HCT116 (cell line): ENCODE measurements at regions of chr12 and their contacts with region 1.

Region 1: GRCh38 chr12:46357438-46358324 is 14.9 kb downstream of the SLC38A2 start:
- DNase-seq: peak; percentile 84
- ATAC-seq: peak; percentile 65
- H3K4me3 ChIP-seq: no peak overlapping the region
- H3K27ac ChIP-seq: peak overlapping the region; percentile 24
- H3K4me1 ChIP-seq: peaks cover 0 to 19% of the 10 kb centered on the region in 2 experiments; a peak in 2 of 4 replicates
- H3K27me3 ChIP-seq: no peaks in the 10 kb centered on the region
- CTCF ChIP-seq: no peak
- POLR2A ChIP-seq: no peak
- RAD21 ChIP-seq: peak; percentile 22

Region 2: DNA sequence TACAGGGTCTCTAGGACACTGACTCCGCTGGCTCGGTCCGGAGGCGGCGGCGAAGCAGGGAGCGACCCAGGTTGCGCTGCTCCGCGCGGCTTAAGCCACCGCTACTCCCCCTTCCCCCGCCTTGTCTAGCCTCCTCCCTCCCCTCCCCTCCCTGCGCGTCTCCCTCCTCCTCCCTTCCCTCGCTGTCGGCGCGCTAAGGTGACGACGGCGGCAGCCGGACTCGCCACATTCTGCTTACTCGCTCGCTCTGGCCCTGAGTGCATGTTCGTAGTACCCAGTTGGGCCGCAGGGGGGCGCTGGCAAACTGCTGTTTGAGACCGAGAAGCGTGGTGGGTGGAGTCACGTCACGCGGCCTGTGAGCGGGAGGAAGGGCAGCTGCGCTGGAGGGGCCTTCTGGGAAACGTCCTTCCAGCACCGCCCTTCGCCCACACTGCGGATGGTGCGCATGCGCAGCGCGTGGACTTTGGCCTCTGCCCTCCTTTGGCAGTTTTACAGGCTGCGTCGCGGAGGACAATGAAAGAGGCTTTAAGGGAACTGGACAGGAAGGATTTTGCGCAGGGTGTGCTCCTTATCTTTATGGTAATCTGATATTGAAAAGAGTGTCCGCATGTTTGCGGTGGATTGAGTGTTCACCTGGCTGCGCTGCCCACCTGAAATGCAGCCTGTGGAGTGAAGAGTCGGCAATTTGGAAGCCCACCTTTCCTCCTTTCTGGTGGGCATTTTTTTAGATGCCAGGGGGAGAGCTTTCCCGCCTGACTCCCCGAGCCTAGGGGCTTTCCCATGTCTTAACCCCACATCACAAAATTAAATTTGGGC is 367.0 kb before region 1 on chr12 and contains the start of gene SCAF11:
- CTCF ChIA-PET with region 1: no interaction called
- POLR2A ChIA-PET with region 1: no interaction called
- RAD21 ChIA-PET with region 1: no interaction called
- intact Hi-C with region 1: loop called (anchors 5 kb)
- DNase-seq: peak; percentile 100
- ATAC-seq: peak; percentile 84
- H3K4me3 ChIP-seq: peak within 1 kb of the TSS; percentile 85 to 89
- H3K27ac ChIP-seq: peak within 1 kb of the TSS; percentile 98
- H3K4me1 ChIP-seq: peaks cover 13 to 22% of the 10 kb centered on the region in 2 experiments
- H3K27me3 ChIP-seq: no peaks in the 10 kb centered on the region
- CTCF ChIP-seq: peak; percentile 81 to 92 (median 91); a peak in 5 of 6 replicates
- POLR2A ChIP-seq: peak; percentile 74
- RAD21 ChIP-seq: peak; percentile 98
- total RNA-seq, gene SCAF11: 79.8 TPM

Region 3: GRCh38 chr12:46153268-46153872 is 204.3 kb before region 1 on chr12:
- CTCF ChIA-PET with region 1: no interaction called
- POLR2A ChIA-PET with region 1: no interaction called
- RAD21 ChIA-PET with region 1: no interaction called
- intact Hi-C with region 1: loop called (anchors 5 kb)
- DNase-seq: peak; percentile 18
- ATAC-seq: no peak
- H3K4me3 ChIP-seq: no peak overlapping the region
- H3K27ac ChIP-seq: no peak overlapping the region
- H3K4me1 ChIP-seq: peaks cover 2 to 6% of the 10 kb centered on the region in 2 experiments; a peak in 2 of 4 replicates
- H3K27me3 ChIP-seq: no peaks in the 10 kb centered on the region
- CTCF ChIP-seq: peak; percentile 46 to 70 (median 63)
- POLR2A ChIP-seq: no peak
- RAD21 ChIP-seq: peak; percentile 73

Region 4: DNA sequence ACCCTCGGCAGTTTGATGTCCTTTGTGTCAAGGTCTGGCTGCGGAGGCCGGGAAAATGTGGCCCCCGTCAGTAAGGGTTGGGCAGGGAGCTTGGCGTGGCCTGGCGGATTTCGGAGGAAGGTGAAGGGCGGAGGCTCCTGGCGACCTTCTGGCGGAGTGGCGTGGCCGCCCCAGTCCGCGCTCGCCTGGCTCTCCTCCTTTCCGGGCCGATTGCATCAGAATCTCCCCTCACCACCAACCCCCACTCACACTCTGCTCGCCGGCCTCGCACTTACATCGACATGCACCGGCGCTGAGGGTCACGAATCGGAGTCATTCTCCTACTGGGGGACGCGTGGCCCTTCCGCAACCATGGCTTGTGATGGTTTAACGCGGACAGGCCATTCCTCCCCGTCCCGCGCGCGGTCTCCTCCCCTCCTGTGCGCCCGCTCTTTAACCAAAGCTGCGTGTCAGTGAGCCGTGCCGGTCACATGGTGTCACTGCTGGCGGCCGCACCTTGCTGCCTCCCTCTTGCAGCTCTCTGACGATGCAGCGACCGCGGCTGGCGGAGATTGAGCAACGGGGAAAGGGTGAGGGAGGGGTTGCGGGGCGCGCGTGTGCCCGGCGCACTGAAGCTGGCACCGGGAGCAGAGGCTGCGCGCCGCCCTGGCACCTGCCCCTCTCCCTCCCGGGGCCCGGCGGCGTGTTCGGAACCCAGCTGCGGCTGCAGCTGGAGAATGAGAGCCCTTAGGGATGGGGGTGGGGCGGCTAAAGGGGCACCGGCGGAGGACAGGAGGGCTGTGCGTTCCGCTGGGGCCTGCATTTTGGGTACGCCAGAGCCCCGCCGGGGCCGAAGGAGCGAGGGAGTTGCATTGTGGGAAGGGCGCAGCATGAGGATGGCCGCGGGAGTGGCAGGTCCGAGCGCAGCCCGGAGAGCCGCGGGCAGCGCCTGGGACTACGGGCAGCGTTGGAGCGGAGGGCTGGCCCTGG is 88.8 kb before region 1 on chr12 and contains the start of gene SLC38A1:
- CTCF ChIA-PET with region 1: no interaction called
- POLR2A ChIA-PET with region 1: interaction called, 7 read pairs
- RAD21 ChIA-PET with region 1: no interaction called
- intact Hi-C with region 1: loop called (anchors 5 kb)
- DNase-seq: peak; percentile 62
- ATAC-seq: peak; percentile 80
- H3K4me3 ChIP-seq: peak within 1 kb of the TSS; percentile 69 to 95
- H3K27ac ChIP-seq: peak within 1 kb of the TSS; percentile 76
- H3K4me1 ChIP-seq: peaks cover 25 to 47% of the 10 kb centered on the region in 2 experiments
- H3K27me3 ChIP-seq: no peaks in the 10 kb centered on the region
- CTCF ChIP-seq: no peak
- POLR2A ChIP-seq: peak; percentile 63
- RAD21 ChIP-seq: 0 out of 2 replicates have a peak, but pooled peaks have one; percentile 8
- total RNA-seq, gene SLC38A1: 155 TPM

Region 5: DNA sequence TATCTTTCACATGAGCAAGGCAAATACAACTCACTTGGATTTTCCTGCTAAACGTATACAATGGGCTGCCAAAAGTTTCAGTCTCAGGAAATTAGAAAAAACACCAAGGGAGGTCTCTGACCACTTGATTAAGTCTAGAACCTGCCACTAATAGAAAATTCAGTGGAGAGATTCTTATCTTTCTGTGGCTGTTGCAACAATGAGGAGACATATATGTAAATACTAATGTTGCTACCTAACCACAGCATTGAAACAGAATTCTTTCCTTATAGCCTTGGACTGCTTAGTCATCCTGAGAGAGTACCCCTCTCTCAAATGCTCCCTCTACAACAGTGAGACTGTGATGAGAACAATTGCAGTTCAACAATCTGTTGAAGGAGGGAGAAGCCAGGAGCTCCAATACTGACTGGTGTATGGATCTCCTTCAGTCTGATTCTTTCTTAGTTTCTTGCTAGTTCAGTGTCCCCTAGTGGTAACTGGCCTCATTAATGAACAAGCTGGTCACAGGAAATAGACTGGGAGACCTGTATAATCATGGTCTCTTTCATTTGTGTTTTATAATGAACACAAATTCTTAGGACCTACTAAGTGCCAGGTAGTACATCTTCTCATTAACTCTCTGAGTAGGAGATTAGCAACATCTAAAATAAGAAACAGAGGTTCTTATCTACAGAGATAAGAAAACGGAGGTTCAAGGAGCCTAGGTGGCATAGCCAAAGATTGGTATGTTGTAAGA is 303.6 kb after region 1 on chr12:
- CTCF ChIA-PET with region 1: no interaction called
- POLR2A ChIA-PET with region 1: no interaction called
- RAD21 ChIA-PET with region 1: no interaction called
- intact Hi-C with region 1: loop called (anchors 5 kb)
- DNase-seq: peak; percentile 71
- ATAC-seq: peak; percentile 78
- H3K4me3 ChIP-seq: no peak overlapping the region
- H3K27ac ChIP-seq: peak overlapping the region; percentile 21; the same call in 1 of the 2 replicates
- H3K4me1 ChIP-seq: peaks cover 53 to 65% of the 10 kb centered on the region in 2 experiments
- H3K27me3 ChIP-seq: no peaks in the 10 kb centered on the region
- CTCF ChIP-seq: peak; percentile 69 to 87 (median 73); a peak in 5 of 6 replicates
- POLR2A ChIP-seq: no peak
- RAD21 ChIP-seq: peak; percentile 93